Activated T-helper 1 cell treated with anti-CD3 and anti-CD28 coated beads, Interleukin-12 subunit alpha, Interleukin-12 subunit beta, Interleukin-2, Interleukin-4 antibody, amounts not matched to agents 30 ng/mL and 10 ng/mL and 1 ng/mL, durations not matched to agents 14 hours and 24 hours and 36 hours (primary cell): ENCODE measurements at regions of chr11 and their contacts with region 1.

Region 1: DNA sequence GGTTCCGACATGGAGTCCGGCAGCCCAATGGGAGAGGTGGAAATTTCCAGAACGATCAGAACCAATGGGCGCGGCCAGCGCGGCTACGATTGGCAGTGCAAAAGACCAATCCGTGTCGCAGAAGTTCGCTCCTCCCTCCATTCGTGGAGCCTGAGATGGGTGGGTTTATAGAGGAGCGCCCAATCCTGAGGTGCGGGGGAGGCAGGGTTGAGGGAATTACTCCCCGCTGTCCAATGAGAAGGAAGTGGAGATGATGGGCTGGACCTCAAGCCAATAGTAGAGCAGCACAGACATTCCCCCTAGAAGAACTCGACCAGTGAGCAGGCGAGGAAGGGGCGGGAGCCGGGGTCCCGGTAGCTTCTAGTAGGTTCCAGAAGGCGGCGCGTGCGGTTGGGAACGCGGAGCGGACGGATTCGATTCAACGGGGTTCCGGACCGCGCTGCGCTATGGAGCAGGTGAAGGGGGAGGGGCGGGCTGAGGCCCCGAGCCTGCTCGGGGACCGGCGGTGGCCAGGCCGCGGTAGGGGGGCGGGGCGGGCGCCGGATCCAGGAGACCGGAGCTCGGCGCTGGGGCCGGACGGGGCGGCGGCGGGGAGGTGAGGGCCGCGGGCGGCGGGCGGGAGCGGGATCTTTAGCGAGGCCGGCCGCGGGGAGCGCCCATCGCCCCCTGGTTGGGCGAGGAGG is at the start of gene STIP1:
- DNase-seq: peak; percentile 99
- H3K4me3 Mint-ChIP-seq: peak within 1 kb of the TSS; percentile 95
- H3K27ac Mint-ChIP-seq: peak within 1 kb of the TSS; percentile 99
- H3K4me1 Mint-ChIP-seq: peaks cover 39% of the 10 kb centered on the region
- H3K27me3 Mint-ChIP-seq: peaks cover 2% of the 10 kb centered on the region
- total RNA-seq, gene STIP1: 493 and 495 TPM in 2 replicates

Region 2: GRCh38 chr11:64152841-64153691 is 32.9 kb before region 1 on chr11:
- intact Hi-C with region 1: loop called (anchors 1 kb)
- DNase-seq: peak; percentile 72
- H3K4me3 Mint-ChIP-seq: no peak overlapping the region
- H3K27ac Mint-ChIP-seq: no peak overlapping the region
- H3K4me1 Mint-ChIP-seq: no peaks in the 10 kb centered on the region
- H3K27me3 Mint-ChIP-seq: no peaks in the 10 kb centered on the region

Region 3: GRCh38 chr11:64196626-64197025 is 10.7 kb after region 1 on chr11:
- intact Hi-C with region 1: loop called (anchors 1 kb)
- DNase-seq: no peak
- H3K4me3 Mint-ChIP-seq: no peak overlapping the region
- H3K27ac Mint-ChIP-seq: no peak overlapping the region
- H3K4me1 Mint-ChIP-seq: peaks cover 35% of the 10 kb centered on the region
- H3K27me3 Mint-ChIP-seq: no peaks in the 10 kb centered on the region

Region 4: GRCh38 chr11:64225612-64226506 is 39.9 kb after region 1 on chr11 and contains the starts of genes NUDT22 and TRPT1:
- intact Hi-C with region 1: loop called (anchors 1 kb)
- DNase-seq: peak; percentile 92
- H3K4me3 Mint-ChIP-seq: peak within 1 kb of the TSS; percentile 87
- H3K27ac Mint-ChIP-seq: peak within 1 kb of the TSS; percentile 80
- H3K4me1 Mint-ChIP-seq: peaks cover 27% of the 10 kb centered on the region
- H3K27me3 Mint-ChIP-seq: no peaks in the 10 kb centered on the region
- total RNA-seq, gene NUDT22: 74.9 and 79.4 TPM in 2 replicates
- total RNA-seq, gene TRPT1: 30.3 and 35.5 TPM in 2 replicates

Region 5: GRCh38 chr11:64269380-64270234 is 83.7 kb after region 1 on chr11:
- intact Hi-C with region 1: loop called (anchors 1 kb)
- DNase-seq: peak; percentile 98
- H3K4me3 Mint-ChIP-seq: peak overlapping the region; percentile 89
- H3K27ac Mint-ChIP-seq: peak overlapping the region; percentile 97
- H3K4me1 Mint-ChIP-seq: peaks cover 31% of the 10 kb centered on the region
- H3K27me3 Mint-ChIP-seq: no peaks in the 10 kb centered on the region